GM10248 (cell line): ENCODE measurements at regions of chr11 and their contacts with region 1.

Region 1: GRCh38 chr11:8263769-8264410 is at the start of gene LMO1:
- DNase-seq: peak; percentile 88
- CTCF ChIP-seq: peak; percentile 80

Region 2: DNA sequence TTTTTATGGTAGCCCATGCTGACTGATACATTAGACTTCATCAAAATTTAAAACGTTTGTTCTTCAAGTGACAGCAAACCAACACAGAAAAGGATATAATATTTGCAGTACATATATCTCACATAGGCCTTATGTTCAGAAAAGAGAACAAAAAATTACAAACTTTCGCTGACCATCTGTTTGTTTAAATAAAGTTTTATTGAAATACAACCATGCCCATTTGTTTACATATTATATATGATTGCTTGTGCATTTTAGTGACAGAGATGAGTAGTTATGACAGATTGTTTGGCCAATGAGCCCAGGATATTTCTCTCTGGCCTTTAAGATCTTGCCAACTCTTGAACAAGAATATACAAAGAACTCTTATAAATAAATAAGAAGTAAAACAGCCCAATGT is 459.7 kb before region 1 on chr11:
- CTCF ChIA-PET with region 1: no interaction called
- POLR2A ChIA-PET with region 1: no interaction called
- DNase-seq: no peak
- CTCF ChIP-seq: no peak

Region 3: GRCh38 chr11:8192016-8192895 is 71.6 kb before region 1 on chr11:
- CTCF ChIA-PET with region 1: interaction called, 16 read pairs
- POLR2A ChIA-PET with region 1: no interaction called
- DNase-seq: peak; percentile 83
- CTCF ChIP-seq: peak; percentile 91

Region 4: DNA sequence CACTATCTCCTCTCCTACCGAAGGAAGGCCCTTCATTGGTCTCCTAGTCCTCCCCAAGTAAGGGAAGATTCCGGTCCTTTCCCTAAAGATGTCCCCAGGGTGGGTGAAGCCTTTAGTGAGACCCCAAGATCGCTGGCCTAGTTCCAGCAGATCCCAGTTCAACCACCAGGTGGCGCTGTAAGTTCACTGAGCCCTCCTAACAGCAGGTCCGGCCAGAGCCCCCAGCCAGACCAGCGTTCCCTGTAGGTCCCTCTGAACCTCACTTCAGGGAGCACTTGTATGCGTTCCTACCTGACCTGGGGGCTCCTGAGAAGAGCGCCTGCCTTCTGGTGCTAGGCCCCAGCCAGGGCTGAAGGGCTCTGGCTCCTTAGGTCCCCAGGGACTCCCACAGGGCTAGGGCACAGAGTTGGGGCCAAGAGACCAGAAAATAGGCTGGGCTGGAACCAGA is 38.3 kb before region 1 on chr11:
- CTCF ChIA-PET with region 1: interaction called, 24 read pairs
- POLR2A ChIA-PET with region 1: no interaction called
- DNase-seq: peak; percentile 88
- CTCF ChIP-seq: peak; percentile 83

Region 5: GRCh38 chr11:8247312-8247711 is 16.6 kb before region 1 on chr11:
- CTCF ChIA-PET with region 1: interaction called, 21 read pairs
- POLR2A ChIA-PET with region 1: no interaction called
- DNase-seq: no peak
- CTCF ChIP-seq: peak; percentile 30

Region 6: DNA sequence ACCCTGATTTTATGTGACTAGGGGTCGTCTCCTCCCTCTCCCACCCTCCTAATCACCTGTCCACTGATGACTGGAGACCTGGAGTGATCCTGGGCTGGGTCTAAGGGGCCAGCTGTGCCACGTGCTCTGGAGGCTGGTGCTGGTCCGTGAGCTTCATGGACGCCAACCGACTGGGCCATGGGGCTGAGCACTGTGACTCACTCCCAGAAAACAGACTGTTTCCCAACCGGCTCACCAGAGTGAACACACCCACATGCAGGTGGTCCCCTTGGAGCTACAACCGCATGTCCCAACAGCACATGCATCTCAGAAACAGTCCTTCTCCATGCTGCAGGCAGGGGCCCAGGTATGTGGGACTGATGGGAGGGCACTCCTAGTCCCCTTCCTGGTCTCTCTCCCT is 13.8 kb after region 1 on chr11:
- CTCF ChIA-PET with region 1: interaction called, 20 read pairs
- POLR2A ChIA-PET with region 1: no interaction called
- DNase-seq: no peak
- CTCF ChIP-seq: no peak

Region 7: GRCh38 chr11:8323161-8323935 is 59.5 kb after region 1 on chr11:
- CTCF ChIA-PET with region 1: no interaction called
- POLR2A ChIA-PET with region 1: no interaction called
- DNase-seq: no peak
- CTCF ChIP-seq: no peak

Region 8: DNA sequence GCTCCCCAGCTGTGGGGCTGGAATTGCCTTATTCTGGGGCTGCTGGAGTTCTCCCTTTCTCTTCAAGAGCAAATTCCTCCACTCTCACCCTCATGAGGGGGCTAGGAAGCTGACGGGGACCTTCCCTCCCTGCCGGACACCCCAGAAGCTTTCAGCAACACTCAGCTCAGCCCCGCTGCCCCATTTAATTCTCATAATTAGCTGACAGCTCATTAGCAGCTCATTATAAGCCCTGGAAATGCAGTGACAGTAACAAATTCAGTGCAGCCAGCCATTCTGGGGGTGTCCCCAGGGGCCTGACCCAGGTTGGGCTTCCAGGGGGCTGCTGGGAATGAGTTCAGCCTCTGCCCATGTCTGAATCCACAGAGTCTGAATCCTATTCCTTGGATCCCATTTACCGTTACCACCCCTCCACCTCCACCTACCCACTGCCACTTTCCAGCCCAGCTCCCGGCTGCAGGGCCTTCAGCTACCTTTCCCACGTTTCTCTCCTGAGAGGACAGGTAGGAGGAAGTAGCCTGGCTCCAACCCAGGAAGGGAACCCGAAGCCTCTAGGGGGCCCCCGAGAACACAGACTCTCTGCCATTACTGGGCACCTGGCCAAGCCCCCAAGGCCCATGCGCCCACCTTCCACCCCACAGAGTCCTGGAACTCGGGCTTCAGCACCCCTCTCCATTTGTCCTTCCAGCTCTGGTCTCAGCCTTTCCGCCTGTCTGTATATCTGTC is 101.5 kb after region 1 on chr11:
- CTCF ChIA-PET with region 1: no interaction called
- POLR2A ChIA-PET with region 1: no interaction called
- DNase-seq: no peak
- CTCF ChIP-seq: no peak

Region 9: DNA sequence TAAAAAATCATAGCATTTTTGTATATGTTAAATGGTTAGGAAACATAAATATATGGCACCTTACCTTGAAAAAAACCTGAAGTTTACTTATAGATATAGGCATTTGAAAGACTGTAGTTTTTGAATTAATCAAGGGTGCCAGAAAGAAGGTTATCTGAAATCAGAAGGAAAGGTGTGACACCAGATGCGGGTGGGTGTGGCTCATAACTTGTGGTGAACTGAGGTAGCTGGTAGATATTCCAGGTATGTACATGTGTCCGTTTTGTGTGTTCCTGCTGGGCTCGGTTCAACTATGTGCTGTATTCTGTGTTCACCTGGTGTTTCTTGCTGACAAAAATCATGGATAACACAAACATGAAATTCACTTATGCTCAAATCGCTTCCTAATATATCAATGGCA is 294.5 kb after region 1 on chr11:
- CTCF ChIA-PET with region 1: no interaction called
- POLR2A ChIA-PET with region 1: no interaction called
- DNase-seq: no peak
- CTCF ChIP-seq: no peak